ENCODE measurements at regions of chr19 and their contacts with region 1.

Region 1: GRCh38 chr19:47145639-47146486 is 15.2 kb downstream of the SAE1 start:
- DNase-seq: no peak
- H3K4me3 ChIP-seq: no peak overlapping the region
- H3K4me1 ChIP-seq: peaks cover 9% of the 10 kb centered on the region
- H3K27me3 ChIP-seq: no peaks in the 10 kb centered on the region

Region 2: DNA sequence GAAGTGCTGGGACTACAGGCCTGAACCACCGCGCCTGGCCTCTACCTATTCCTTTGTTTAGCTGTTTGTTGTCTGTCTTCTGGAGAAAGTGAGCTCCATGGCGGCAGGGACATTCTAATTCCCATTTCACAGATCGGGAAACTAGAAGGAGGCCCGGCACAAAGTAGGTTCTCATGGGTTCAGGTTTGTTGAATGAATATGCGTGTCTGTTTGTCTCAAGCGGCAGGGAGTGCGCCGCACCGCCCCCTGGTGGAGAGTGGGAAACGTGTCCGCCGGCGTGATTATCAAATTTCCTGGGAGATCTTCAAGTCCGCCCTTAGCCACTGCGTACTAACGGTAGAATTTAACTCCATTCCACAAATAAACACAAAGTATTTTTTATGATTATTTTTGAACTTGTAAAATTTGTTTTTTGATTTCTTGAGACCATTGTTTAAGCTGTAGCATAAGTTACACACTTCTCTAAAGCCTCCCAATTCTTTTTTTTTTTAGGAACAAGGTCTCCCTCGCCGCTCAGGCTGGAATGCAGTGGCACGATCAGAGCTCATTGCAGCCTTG is 101.5 kb after region 1 on chr19:
- in situ Hi-C with region 1: loop called (anchors 5 kb)
- DNase-seq: peak; percentile 66 to 86
- H3K4me3 ChIP-seq: no peak overlapping the region
- H3K4me1 ChIP-seq: peaks cover 24% of the 10 kb centered on the region
- H3K27me3 ChIP-seq: no peaks in the 10 kb centered on the region

Region 3: DNA sequence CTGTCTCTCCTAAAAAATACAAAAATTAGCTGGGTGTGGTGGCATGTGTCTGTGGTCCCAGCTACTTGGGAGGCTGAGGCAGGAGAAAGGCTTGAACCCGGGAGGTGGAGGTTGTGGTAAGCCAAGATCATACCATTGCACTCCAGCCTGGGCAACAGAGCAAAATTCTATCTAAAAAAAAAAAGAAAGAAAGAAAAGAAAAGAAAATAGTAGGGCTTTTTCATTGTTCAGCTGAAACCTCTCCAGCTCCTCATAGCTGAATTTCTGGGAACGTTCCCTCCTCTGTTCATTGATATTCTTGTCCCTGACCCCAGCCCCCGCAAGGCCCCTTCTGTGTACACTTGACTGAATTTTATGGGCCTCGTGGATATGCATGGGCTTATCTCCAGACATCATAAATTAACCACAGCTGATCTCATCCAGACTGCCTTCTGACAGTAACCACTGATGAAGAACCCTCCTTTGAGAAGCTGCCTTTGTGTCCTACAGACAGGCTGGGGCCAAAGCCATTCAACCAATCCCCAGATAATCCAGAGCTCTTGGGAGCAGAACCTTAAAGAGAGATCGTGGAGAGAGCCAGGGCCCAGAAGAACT is 848.4 kb after region 1 on chr19 and contains the start of gene ELSPBP1:
- in situ Hi-C with region 1: no loop called
- DNase-seq: no peak
- H3K4me3 ChIP-seq: no peak within 1 kb of the TSS
- H3K4me1 ChIP-seq: no peaks in the 10 kb centered on the region
- H3K27me3 ChIP-seq: 0 out of 2 replicates have a peak, but pooled peaks cover 5% of the 10 kb centered on the region